Activated T-helper 2 cell treated with anti-CD3 and anti-CD28 coated beads, Interferon-gamma antibody, Interleukin-2, Interleukin-4, amounts not matched to agents 10 μg/mL and 5 μg/mL and 100 μg/mL, durations not matched to agents 14 hours and 24 hours and 36 hours (primary cell): ENCODE measurements at regions of chr2 and their contacts with region 1.

Region 1: DNA sequence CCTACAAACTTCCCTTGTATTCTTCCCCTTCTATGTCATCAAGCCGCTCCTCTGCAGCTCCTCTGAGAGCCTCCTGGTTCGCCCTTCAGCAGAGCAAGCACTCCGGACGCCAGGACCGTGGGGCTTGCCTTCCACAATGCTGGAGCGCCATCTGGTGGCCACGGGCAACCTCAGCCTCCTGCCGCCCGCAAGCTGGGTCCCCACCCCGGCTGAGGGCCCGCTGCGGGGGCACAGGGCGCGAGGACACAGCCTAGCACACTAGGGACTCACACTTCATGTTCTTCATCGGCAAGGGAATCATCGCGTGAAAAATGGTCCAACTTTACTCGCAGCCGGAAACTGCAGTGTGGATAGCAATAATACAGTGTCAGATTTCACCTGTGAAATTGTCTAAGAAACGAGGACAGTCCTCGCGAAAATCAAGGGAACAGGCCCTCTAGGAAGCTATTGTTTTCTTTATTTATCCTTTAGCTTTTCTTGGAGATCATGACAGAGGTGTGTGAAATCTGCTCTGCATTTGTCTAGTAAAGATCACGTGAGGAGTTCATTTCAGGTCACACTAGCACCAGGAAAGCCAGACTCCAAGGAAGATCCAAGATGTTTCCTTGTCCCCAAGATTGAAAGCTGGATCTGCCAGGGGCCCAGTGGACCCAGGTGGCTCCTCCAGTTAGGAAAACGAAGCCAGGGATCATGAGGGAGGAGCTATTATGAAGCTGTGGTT is 5.8 kb downstream of the PRLH start:
- DNase-seq: peak; percentile 68
- H3K4me3 Mint-ChIP-seq: no peak overlapping the region
- H3K27ac Mint-ChIP-seq: no peak overlapping the region
- H3K4me1 Mint-ChIP-seq: no peaks in the 10 kb centered on the region
- H3K27me3 Mint-ChIP-seq: peaks cover 1% of the 10 kb centered on the region

Region 2: GRCh38 chr2:237122214-237122666 is 449.9 kb before region 1 on chr2:
- intact Hi-C with region 1: loop called (anchors 1 kb)
- DNase-seq: peak; percentile 20
- H3K4me3 Mint-ChIP-seq: no peak overlapping the region
- H3K27ac Mint-ChIP-seq: no peak overlapping the region
- H3K4me1 Mint-ChIP-seq: peaks cover 3% of the 10 kb centered on the region
- H3K27me3 Mint-ChIP-seq: no peaks in the 10 kb centered on the region

Region 3: DNA sequence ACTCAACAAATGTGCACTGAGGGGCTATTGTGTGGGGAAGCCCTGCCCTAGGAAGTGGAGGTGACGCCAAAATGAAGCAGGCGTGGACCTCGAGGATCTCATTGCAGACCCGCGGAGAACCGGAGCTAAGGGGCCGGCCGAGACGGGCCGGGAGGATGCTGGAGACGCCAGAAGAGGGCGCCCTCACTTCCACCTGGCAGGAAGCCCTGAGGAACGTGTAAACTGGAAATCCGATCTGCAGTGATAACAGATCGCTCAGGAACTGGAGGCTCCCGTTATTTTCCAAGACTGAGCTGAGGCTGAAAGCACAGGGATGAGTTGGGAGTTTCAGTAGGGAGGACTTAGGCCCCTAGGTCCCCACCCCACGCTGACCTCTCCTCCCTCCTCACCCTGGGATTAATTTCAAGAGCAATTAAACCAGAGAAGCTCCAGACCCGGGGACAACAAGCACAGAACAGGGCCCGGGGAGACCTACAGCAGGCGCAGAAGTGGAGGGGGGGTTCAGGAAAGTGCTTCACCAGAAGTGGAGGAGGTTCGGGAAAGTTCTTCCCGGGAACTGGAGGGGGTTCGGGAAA is 150.6 kb before region 1 on chr2:
- intact Hi-C with region 1: loop called (anchors 2 kb)
- DNase-seq: peak; percentile 61
- H3K4me3 Mint-ChIP-seq: peak overlapping the region; percentile 37
- H3K27ac Mint-ChIP-seq: no peak overlapping the region
- H3K4me1 Mint-ChIP-seq: peaks cover 26% of the 10 kb centered on the region
- H3K27me3 Mint-ChIP-seq: peaks cover 6% of the 10 kb centered on the region

Region 4: GRCh38 chr2:237512774-237513466 is 59.3 kb before region 1 on chr2:
- intact Hi-C with region 1: loop called (anchors 1 kb)
- DNase-seq: peak; percentile 64
- H3K4me3 Mint-ChIP-seq: no peak overlapping the region
- H3K27ac Mint-ChIP-seq: no peak overlapping the region
- H3K4me1 Mint-ChIP-seq: no peaks in the 10 kb centered on the region
- H3K27me3 Mint-ChIP-seq: peaks cover 1% of the 10 kb centered on the region

Region 5: DNA sequence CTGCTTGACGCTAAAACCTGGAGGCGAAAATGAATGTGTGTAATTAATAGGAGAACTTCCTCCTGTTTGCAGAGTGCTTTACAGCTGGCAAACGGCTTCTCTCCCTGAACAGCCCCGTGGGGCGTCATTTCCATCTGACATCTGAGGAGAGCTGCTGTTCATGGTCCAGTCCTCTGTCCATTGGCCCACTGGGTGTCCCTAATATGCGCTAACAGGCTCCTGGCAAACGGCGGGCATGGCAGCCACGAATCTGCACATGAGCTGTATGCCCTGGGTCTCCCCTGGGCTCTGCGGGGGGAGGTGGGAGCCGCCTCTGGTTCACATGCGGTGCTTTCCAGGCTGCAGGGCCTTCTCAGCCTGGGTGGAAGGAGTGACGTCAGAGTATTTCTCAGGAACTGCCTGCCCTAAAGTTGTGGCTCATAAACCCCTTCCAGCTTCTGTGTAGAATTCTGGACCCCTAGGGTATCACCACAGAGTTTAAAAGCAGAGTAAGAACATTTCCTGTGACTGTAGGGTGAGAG is 128.4 kb after region 1 on chr2:
- intact Hi-C with region 1: no loop called
- DNase-seq: peak; percentile 63
- H3K4me3 Mint-ChIP-seq: peak overlapping the region; percentile 80
- H3K27ac Mint-ChIP-seq: peak overlapping the region; percentile 96
- H3K4me1 Mint-ChIP-seq: peaks cover 87% of the 10 kb centered on the region
- H3K27me3 Mint-ChIP-seq: no peaks in the 10 kb centered on the region